ENCODE measurements at regions of chr18 and their contacts with region 1.

Region 1: DNA sequence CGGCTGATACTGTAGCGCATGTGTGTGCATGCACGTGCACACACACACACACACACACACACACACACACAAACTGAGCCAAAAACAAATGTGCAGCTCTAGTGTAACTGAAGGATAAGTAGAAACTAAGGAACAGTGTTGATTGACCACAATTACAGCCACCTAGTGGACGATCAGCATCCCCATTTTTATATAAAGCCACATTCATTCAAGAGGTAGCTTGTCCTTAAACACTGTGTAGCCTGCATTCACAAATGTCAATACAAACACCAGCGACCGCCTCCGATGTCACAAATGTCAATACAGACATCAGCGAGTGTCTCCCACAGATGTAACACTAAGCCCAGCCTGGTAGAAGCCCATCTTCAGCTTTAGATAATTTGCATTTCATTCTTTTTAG is 167.4 kb downstream of the PTGR3 start:
- DNase-seq: peak; percentile 49
- H3K4me3 ChIP-seq: no peak overlapping the region
- H3K27ac ChIP-seq: no peak overlapping the region
- H3K4me1 ChIP-seq: no peaks in the 10 kb centered on the region
- H3K27me3 ChIP-seq: no peaks in the 10 kb centered on the region
- CTCF ChIP-seq: peak; percentile 39 to 52
- POLR2A ChIP-seq: no peak

Region 2: GRCh38 chr18:74652392-74652988 is 389.1 kb before region 1 on chr18:
- CTCF ChIA-PET with region 1: interaction called, 54 read pairs
- POLR2A ChIA-PET with region 1: no interaction called
- dilution Hi-C with region 1: no loop called
- intact Hi-C with region 1: loop called (anchors 2 kb)
- DNase-seq: peak; percentile 81
- H3K4me3 ChIP-seq: no peak overlapping the region
- H3K27ac ChIP-seq: peak overlapping the region; percentile 32
- H3K4me1 ChIP-seq: peaks cover 5% of the 10 kb centered on the region
- H3K27me3 ChIP-seq: no peaks in the 10 kb centered on the region
- CTCF ChIP-seq: peak; percentile 21 to 28
- POLR2A ChIP-seq: no peak

Region 3: DNA sequence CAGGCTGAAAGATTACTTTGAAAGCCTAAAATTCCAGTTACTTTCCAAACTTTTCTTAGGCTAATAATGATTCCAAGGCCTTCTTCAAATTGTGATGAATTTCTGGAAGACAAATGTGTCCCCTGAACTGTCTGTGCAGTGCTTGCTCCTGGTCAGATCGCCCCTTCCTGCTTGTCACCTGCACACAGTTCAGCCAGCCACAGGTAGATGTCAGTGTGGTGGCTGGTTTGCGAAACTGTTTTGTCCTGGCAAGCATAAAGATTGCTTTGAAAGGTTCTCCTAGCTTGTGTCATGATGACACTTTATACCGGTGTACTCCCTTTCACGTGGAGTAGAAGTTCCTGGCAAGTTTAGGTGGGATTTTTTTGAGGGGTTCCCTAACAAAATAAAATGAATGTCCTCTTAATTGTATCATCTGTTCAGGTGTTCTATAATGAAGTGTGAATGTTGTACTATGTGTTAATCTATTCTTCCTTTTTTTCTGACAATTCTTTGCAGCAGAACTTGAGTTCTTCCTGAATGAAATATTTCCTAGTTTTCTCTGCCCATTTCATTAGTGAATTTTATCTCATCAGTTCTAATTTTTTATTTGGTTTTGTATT is 145.1 kb before region 1 on chr18:
- CTCF ChIA-PET with region 1: interaction called, 6 read pairs
- POLR2A ChIA-PET with region 1: no interaction called
- dilution Hi-C with region 1: no loop called
- intact Hi-C with region 1: loop called (anchors 5 kb)
- DNase-seq: peak; percentile 16
- H3K4me3 ChIP-seq: no peak overlapping the region
- H3K27ac ChIP-seq: no peak overlapping the region
- H3K4me1 ChIP-seq: peaks cover 12% of the 10 kb centered on the region
- H3K27me3 ChIP-seq: no peaks in the 10 kb centered on the region
- CTCF ChIP-seq: no peak
- POLR2A ChIP-seq: no peak

Region 4: DNA sequence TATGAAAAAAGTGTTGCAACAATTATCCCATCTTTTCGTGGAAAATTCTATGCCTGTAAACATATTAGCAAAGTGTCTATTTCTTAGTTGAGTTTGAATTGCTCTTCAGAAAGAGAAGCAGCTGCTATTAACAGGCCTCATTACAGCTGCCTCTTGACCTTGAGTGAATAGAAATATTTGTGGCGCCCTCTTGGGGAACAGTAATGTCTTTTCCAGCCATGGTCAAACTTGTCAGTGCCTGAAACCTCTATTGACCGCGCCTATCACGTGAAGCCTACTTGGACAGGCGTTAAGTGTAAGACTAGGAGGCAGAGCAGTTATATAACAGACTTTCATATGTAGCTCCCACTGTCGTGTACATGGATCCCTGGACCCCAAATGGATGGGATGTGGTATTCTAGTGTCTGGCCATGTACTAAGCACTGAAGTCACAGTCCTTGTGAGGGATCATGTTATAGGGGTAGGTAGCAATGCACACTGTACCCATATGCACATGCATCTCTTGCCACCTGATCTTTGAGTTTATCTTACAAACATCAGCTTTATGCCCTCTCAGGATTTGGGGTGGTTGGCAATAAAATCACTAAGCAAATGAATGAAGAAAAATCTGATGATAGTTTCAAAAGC is 77.7 kb before region 1 on chr18:
- CTCF ChIA-PET with region 1: interaction called, 13 read pairs
- POLR2A ChIA-PET with region 1: no interaction called
- dilution Hi-C with region 1: no loop called
- intact Hi-C with region 1: no loop called
- DNase-seq: peak; percentile 62
- H3K4me3 ChIP-seq: no peak overlapping the region
- H3K27ac ChIP-seq: no peak overlapping the region
- H3K4me1 ChIP-seq: no peaks in the 10 kb centered on the region
- H3K27me3 ChIP-seq: no peaks in the 10 kb centered on the region
- CTCF ChIP-seq: peak; percentile 19 to 45
- POLR2A ChIP-seq: no peak

Region 5: DNA sequence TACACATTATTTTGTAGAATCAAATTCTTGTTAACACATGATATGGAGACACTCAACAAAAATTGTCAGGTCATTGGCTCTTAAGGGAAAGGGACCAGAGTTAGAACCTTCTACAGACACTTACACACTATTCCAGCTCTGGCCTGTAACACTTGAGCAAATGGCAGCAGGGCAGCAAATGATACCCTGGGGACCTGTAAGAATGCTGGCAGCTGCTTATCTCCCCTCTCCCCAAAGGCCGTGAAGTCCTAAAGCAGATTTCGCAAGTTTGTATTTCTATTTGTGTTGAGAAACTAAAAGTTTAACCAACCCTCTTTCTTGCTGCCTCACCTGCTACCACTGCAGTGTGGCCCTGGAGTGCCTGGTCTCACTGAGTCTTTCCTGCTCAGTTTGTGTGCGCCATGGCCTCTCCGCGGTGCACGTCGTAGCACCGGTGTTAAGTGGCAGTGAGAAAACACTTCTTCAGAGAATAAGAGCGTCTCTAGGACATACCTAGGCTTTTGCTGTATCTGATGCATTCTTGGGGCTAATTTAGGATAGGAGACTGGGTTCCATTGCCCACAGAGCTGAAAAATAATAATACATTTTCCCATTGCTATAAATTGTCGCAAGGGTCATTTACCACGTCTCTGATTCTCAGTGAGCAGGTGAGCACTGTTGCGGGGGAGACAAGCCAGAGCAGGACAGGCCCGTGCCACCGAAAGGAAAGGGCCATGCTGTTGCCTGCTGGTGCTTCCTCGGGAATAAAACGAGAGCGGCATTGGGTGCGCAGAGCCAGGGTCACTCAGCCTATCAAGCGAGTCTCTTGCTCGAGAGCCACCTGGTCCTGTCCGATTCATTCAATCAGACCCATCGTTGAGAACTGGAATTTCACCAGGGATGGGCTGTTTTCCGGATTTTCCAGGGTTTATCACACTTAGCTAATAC is 37.6 kb before region 1 on chr18:
- CTCF ChIA-PET with region 1: interaction called, 10 read pairs
- POLR2A ChIA-PET with region 1: no interaction called
- dilution Hi-C with region 1: no loop called
- intact Hi-C with region 1: no loop called
- DNase-seq: no peak
- H3K4me3 ChIP-seq: no peak overlapping the region
- H3K27ac ChIP-seq: no peak overlapping the region
- H3K4me1 ChIP-seq: no peaks in the 10 kb centered on the region
- H3K27me3 ChIP-seq: no peaks in the 10 kb centered on the region
- CTCF ChIP-seq: no peak
- POLR2A ChIP-seq: no peak

Region 6: GRCh38 chr18:75029481-75029880 is 12.1 kb before region 1 on chr18:
- CTCF ChIA-PET with region 1: interaction called, 12 read pairs
- POLR2A ChIA-PET with region 1: no interaction called
- dilution Hi-C with region 1: no loop called
- intact Hi-C with region 1: no loop called
- DNase-seq: no peak
- H3K4me3 ChIP-seq: no peak overlapping the region
- H3K27ac ChIP-seq: no peak overlapping the region
- H3K4me1 ChIP-seq: no peaks in the 10 kb centered on the region
- H3K27me3 ChIP-seq: no peaks in the 10 kb centered on the region
- CTCF ChIP-seq: no peak
- POLR2A ChIP-seq: no peak

Region 7: DNA sequence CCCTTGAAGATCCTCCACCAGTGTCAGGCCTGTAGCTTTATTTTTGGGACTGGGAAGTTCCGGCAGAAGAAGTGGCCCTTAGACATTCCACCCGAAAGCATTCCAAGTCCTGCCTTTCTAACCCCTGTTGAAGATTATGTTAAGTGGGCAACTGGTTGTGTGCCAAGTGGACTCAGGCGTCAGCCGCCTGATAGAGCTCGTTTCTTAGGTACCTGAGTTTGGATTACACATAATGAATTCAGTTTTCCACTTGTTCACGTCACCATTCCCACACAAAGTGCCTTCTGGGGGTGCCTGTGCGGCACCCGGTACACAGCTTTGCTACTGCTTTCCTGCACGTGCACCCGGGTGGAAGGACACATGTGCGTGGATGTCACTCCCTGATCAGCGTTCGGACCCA is 10.9 kb after region 1 on chr18:
- CTCF ChIA-PET with region 1: interaction called, 26 read pairs
- POLR2A ChIA-PET with region 1: interaction called, 3 read pairs
- dilution Hi-C with region 1: no loop called
- intact Hi-C with region 1: no loop called
- DNase-seq: no peak
- H3K4me3 ChIP-seq: no peak overlapping the region
- H3K27ac ChIP-seq: no peak overlapping the region
- H3K4me1 ChIP-seq: peaks cover 6% of the 10 kb centered on the region
- H3K27me3 ChIP-seq: no peaks in the 10 kb centered on the region
- CTCF ChIP-seq: no peak
- POLR2A ChIP-seq: no peak

Region 8: GRCh38 chr18:75090336-75090735 is 48.8 kb after region 1 on chr18:
- CTCF ChIA-PET with region 1: no interaction called
- POLR2A ChIA-PET with region 1: no interaction called
- dilution Hi-C with region 1: no loop called
- intact Hi-C with region 1: no loop called
- DNase-seq: no peak
- H3K4me3 ChIP-seq: no peak overlapping the region
- H3K27ac ChIP-seq: no peak overlapping the region
- H3K4me1 ChIP-seq: no peaks in the 10 kb centered on the region
- H3K27me3 ChIP-seq: no peaks in the 10 kb centered on the region
- CTCF ChIP-seq: no peak
- POLR2A ChIP-seq: no peak

Region 9: GRCh38 chr18:75238100-75238499 is 196.5 kb after region 1 on chr18:
- CTCF ChIA-PET with region 1: no interaction called
- POLR2A ChIA-PET with region 1: no interaction called
- dilution Hi-C with region 1: no loop called
- intact Hi-C with region 1: no loop called
- DNase-seq: no peak
- H3K4me3 ChIP-seq: no peak overlapping the region
- H3K27ac ChIP-seq: no peak overlapping the region
- H3K4me1 ChIP-seq: peaks cover 11% of the 10 kb centered on the region
- H3K27me3 ChIP-seq: no peaks in the 10 kb centered on the region
- CTCF ChIP-seq: no peak
- POLR2A ChIP-seq: no peak

Measured in endothelial cell of umbilical vein (primary cell).